MCF 10A (cell line): ENCODE measurements at regions of chr1 and their contacts with region 1.

Region 1: DNA sequence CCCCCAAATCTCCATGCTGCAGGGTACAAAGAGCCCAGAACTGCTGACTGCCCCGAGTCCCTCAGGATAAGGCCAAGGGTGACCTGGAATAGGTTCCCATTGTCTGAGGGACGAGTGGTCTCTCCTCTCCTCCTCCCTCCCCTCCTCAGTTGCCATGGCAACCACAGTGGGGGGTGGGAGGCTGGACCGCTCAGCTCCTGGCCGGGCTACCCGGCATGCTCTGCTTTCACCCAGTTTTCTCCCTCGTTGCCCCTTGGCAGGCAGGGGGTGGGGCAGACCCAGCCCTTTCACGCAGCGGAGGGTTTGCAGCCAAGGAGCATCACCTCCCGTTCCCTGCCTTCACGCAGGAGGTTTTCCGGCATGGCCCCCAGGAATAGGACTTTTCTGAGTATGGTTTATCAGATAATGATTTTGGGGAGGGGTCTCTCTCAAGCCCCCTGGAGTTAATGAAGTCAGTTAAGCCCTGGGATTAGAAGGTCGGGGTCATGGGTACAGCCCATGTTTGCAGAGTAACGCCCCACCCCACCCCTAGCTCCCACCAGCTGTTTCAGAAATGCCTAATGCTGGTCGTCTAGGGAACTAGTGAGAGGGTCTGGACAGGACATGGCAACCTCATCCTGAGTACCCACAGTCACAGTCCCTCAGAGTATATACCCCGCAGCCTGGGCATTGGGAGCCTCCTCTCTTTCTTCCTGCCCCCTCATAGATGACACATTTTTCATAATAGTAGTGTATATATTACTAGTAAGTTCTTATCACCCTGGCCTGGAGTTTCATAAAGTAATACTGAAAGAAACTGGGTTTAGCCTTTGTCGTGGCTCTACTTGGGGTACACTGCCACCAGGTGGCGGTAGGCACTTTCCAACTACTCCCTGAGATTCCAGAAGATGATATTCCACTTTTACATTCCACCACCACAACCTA is 20.7 kb downstream of the C1QB start:
- DNase-seq: peak; percentile 63
- H3K4me3 Mint-ChIP-seq: no peak overlapping the region
- H3K27ac Mint-ChIP-seq: no peak overlapping the region
- H3K4me1 Mint-ChIP-seq: no peaks in the 10 kb centered on the region
- H3K27me3 Mint-ChIP-seq: peaks cover 27% of the 10 kb centered on the region
- CTCF ChIP-seq: peak; percentile 79

Region 2: DNA sequence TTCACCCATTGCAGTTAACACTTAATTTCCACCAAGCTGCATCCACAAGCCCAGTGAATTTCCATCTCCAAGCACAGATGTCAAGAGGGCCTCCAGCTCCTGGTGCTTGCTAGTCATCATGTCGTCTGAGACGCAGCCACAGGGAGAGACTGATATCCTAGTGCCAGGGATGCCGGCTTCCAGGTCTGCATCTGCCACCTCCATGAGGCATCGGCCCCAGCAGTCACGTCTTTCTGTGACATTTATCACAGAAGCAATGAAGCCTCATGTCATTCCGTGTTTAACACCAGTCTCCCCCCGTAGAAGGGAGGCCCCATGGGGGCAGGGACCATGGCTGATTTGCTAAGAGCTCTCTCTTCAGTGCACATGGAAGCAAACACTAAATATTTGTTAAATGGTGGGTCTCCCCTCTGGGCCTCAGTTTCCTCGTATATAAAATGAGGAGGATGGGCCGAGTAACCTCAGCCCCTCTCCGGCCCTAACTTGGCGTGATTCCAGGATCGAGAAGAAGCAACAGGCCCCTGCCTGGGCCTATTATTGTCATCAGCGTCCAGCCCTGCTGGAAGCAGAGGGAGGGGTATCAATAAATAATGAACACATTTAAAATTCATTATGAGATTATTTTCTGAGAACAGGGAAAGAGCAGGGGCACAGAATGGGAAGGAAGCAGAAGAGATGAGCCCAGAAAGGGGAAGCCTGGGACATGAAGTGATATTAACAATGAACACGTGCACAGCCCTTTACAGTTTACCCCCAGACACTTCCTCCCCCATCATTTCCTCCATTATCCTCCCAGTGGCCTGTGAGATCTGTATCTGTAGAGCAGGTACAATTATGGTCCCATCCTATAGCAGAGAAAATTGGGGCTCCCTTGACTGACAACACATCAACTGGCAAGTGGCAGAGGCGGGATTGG is 21.5 kb before region 1 on chr1:
- CTCF ChIA-PET with region 1: no interaction called
- POLR2A ChIA-PET with region 1: no interaction called
- intact Hi-C with region 1: no loop called
- DNase-seq: no peak
- H3K4me3 Mint-ChIP-seq: no peak overlapping the region
- H3K27ac Mint-ChIP-seq: no peak overlapping the region
- H3K4me1 Mint-ChIP-seq: no peaks in the 10 kb centered on the region
- H3K27me3 Mint-ChIP-seq: peaks cover 82% of the 10 kb centered on the region
- CTCF ChIP-seq: no peak

Region 3: GRCh38 chr1:22889213-22889827 is 215.6 kb after region 1 on chr1:
- CTCF ChIA-PET with region 1: interaction called, 15 read pairs
- POLR2A ChIA-PET with region 1: no interaction called
- intact Hi-C with region 1: loop called (anchors 1 kb)
- DNase-seq: peak; percentile 58
- H3K4me3 Mint-ChIP-seq: no peak overlapping the region
- H3K27ac Mint-ChIP-seq: no peak overlapping the region
- H3K4me1 Mint-ChIP-seq: no peaks in the 10 kb centered on the region
- H3K27me3 Mint-ChIP-seq: no peaks in the 10 kb centered on the region
- CTCF ChIP-seq: peak; percentile 84

Region 4: DNA sequence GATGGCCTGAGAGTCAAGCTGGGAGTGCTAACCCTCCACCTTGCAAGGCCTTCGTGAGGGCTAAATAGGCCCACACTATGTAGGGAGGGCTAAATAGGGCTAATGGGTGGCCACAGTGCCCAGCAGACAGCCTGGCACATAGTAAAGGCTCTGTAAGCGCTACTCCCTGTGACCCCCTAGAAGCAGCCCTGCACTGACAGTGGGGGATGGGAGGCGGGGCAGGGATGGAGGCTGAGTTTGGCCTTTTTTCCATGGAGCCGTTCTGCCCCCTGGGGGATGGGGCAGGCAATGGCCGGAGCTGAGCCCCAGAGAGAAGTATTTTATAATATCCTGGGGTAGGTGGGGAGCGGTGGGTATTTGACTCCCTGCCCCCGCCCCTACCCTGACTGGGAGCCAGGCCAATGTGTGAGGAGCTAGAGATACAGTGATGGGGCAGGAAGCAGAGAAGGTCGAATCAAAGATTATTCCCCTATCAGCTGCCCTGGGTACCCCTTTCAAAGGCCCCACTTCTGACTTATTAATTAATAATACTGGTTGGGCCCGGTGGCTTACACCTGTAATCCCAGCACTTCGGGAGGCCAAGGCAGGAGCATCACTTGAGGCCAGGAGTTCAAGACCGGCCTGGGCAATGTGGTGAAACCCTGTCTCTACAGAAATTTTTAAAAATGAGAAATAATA is 256.6 kb after region 1 on chr1:
- CTCF ChIA-PET with region 1: interaction called, 13 read pairs
- POLR2A ChIA-PET with region 1: no interaction called
- intact Hi-C with region 1: loop called (anchors 1 kb)
- DNase-seq: peak; percentile 68
- H3K4me3 Mint-ChIP-seq: no peak overlapping the region
- H3K27ac Mint-ChIP-seq: no peak overlapping the region
- H3K4me1 Mint-ChIP-seq: no peaks in the 10 kb centered on the region
- H3K27me3 Mint-ChIP-seq: peaks cover 54% of the 10 kb centered on the region
- CTCF ChIP-seq: peak; percentile 72

Region 5: DNA sequence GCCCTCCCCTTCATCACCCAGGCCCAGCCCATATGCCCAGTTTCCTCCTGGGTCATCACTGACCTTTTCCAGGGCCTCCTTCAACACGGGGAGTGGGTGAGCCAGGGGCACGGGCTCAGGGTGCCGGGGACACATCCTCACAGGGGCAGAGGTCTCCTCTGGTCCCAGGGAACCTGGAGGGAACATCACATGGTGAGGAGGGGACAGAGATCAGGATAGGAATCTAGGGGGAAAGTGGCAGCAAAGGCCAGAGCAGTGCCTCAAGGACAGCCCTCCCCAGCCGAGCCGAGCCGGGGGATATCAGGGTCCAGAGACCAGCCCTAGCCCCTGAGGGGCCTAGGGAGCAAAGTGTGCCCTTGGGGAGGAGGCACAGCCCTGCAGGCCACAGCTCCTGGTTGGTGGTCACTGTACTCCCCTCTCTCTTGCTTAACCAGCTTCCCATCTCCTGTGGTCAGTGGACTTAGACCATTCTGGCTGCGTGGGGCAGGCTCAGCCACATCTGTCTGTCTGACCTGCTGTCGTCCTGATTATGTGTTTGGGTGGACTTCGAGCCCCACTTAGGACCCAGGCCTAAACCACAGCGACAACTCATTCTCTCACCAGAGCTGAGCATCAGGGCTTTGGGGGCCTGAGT is 289.4 kb after region 1 on chr1:
- CTCF ChIA-PET with region 1: interaction called, 28 read pairs
- POLR2A ChIA-PET with region 1: no interaction called
- intact Hi-C with region 1: loop called (anchors 1 kb)
- DNase-seq: no peak
- H3K4me3 Mint-ChIP-seq: no peak overlapping the region
- H3K27ac Mint-ChIP-seq: no peak overlapping the region
- H3K4me1 Mint-ChIP-seq: peaks cover 4% of the 10 kb centered on the region
- H3K27me3 Mint-ChIP-seq: peaks cover 4% of the 10 kb centered on the region
- CTCF ChIP-seq: no peak

Region 6: GRCh38 chr1:22969304-22969709 is 295.6 kb after region 1 on chr1:
- CTCF ChIA-PET with region 1: interaction called, 28 read pairs
- POLR2A ChIA-PET with region 1: no interaction called
- intact Hi-C with region 1: loop called (anchors 1 kb)
- DNase-seq: peak; percentile 78
- H3K4me3 Mint-ChIP-seq: peak overlapping the region; percentile 49
- H3K27ac Mint-ChIP-seq: peak overlapping the region; percentile 6
- H3K4me1 Mint-ChIP-seq: peaks cover 32% of the 10 kb centered on the region
- H3K27me3 Mint-ChIP-seq: peaks cover 10% of the 10 kb centered on the region
- CTCF ChIP-seq: no peak